ENCODE measurements at regions of chr13 and their contacts with region 1.

Region 1: DNA sequence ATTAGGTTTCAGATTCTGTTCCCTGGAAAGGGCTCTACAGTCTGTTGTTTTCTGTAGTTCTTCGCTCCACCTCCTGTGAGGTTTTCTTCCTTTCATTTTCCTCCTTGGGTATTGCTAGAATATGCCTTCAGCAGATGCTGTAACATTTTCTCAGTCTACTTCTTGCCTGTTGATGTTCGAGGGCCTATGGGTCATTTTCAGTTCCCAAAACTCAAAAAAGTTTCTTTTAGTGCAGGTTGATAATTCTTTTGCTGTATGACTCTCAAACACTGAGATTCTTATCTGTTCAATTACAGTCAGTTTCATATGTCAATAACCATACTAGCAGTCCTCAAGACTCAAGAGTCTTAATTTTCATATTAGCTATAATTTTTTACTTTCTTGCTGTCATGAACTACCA is 268.3 kb downstream of the RFC3 start:
- DNase-seq: no peak
- ATAC-seq: no peak
- H3K4me3 ChIP-seq: no peak overlapping the region
- H3K27ac ChIP-seq: no peak overlapping the region
- H3K4me1 ChIP-seq: no peaks in the 10 kb centered on the region
- H3K27me3 ChIP-seq: no peaks in the 10 kb centered on the region
- CTCF ChIP-seq: no peak

Region 2: DNA sequence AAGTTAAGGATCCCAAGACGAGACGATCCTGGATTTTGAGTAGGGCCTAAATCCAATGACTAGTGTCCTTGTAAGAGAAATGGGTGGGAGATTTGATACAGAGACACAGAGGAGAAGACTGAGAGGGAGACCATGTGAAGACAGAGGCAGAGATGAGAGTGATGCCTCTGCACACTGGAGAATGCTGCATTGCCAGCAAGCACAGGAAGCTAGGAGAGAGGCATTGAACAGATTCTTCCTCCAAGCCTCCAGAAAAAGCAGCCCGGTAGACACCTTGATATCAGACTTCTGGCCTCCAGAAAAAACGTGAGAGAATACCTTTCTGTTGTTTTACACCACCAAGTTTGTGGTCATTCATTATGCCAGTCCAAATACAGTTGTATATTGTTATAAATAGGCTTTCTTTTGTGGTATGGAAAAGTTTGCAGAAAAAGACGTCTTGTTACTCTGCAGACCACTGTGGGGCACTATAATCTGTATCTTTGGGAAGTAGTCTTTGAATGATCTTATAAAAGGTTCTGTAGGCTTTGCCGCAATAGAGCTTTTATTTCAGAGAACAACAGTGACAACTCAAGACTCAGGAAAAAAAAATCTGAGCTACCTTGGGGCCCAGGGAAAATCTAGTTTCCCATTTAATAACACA is 286.2 kb before region 1 on chr13:
- intact Hi-C with region 1: loop called in 1 of 2 experiments (anchors 10 kb)
- DNase-seq: peak in 2 of 4 donors; percentile 36 to 59
- ATAC-seq: peak; percentile 65
- H3K4me3 ChIP-seq: no peak overlapping the region
- H3K27ac ChIP-seq: no peak overlapping the region
- H3K4me1 ChIP-seq: peaks cover 4 to 9% of the 10 kb centered on the region in 2 donors
- H3K27me3 ChIP-seq: no peaks in the 10 kb centered on the region
- CTCF ChIP-seq: peak; percentile 15 to 23